ENCODE measurements at regions of chr5 and their contacts with region 1.

Region 1: DNA sequence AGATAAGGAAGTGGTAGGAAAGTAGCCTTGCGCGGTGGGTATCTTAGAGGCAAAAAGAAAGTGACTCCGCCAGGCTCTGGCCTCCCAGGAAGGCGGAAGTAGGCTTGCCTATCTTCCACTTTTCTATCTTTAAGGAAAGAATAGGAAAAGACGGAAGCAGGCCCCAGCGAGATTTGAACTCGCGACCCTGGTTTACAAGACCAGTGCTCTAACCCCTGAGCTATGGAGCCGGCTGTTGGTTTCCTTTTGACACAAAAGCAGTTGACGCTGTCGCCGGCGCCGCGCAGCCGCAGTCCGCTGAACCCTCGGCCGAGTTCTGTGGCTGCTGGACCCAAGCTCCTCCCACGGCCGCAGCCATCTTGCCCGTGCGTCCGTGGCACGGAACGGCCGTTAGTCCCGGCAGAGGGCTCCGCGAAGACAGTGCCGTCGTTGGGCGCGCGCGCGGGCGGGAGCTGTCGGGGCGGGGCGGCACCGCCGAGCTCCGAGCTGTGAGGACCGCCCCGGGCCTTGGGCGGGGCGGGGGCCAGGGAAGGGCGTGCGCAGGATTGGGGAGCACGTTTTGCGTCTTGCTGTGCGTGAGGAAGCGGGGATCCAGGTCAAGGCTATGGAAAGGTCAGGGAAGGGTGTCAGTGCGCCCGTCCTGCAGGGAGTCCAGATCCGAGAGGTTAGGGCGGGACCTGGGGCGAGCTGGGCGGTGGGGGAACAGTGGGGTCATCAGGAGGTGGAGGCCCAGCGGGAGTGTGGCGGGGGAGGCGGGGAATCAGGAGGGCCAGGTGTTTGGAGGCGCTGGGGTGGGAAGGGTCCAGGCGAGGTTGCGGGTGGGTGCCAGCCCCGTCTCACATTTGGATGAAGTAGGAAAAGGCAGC is 13.2 kb downstream of the TRIM7 start:
- DNase-seq: peak; percentile 97

Region 2: GRCh38 chr5:180950291-180950949 is 241.3 kb before region 1 on chr5:
- intact Hi-C with region 1: no loop called
- DNase-seq: no peak

Region 3: GRCh38 chr5:181207214-181208107 is 15.7 kb after region 1 on chr5:
- intact Hi-C with region 1: loop called (anchors 1 kb)
- DNase-seq: no peak

Region 4: DNA sequence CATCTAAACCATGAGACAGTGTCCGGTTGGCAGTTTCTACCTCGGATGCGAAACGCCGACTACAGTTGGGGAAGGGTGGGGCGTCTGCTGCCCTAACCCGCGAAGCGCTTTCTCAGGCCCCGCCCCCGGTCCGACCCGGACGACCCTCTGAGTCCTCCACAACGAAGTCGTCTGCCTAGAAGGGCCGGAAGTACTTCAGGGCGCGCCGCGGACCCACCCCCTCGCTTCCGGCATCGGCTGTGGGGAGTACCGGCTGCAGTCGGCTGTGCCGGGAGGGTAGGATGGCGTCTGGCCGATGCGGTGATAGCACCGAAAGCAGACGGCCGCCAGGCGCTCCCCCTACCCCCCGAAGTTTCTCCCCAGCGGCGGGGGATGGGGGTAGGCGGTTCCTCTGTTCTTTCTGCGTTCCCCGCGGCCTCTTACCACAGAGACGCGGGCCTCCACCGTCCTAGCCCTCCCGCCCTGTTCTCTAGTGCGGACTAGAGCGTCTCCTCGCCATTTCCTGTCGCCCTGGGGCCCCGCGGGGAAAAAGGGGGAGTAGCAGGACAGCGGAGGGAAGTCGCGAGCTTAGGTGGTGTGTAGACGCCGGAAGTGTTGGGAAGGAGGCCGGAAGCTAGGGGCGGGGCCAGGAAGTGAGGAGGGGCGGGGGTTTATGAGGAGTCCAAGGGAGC is 31.4 kb after region 1 on chr5 and contains the start of gene TRIM41:
- intact Hi-C with region 1: loop called (anchors 1 kb)
- DNase-seq: peak; percentile 99
- total RNA-seq, gene TRIM41: 33.0 TPM

Region 5: GRCh38 chr5:181243512-181244343 is 52.0 kb after region 1 on chr5 and contains the start of gene RACK1:
- intact Hi-C with region 1: loop called (anchors 1 kb)
- DNase-seq: peak; percentile 92
- total RNA-seq, gene RACK1: 557 TPM

Region 6: DNA sequence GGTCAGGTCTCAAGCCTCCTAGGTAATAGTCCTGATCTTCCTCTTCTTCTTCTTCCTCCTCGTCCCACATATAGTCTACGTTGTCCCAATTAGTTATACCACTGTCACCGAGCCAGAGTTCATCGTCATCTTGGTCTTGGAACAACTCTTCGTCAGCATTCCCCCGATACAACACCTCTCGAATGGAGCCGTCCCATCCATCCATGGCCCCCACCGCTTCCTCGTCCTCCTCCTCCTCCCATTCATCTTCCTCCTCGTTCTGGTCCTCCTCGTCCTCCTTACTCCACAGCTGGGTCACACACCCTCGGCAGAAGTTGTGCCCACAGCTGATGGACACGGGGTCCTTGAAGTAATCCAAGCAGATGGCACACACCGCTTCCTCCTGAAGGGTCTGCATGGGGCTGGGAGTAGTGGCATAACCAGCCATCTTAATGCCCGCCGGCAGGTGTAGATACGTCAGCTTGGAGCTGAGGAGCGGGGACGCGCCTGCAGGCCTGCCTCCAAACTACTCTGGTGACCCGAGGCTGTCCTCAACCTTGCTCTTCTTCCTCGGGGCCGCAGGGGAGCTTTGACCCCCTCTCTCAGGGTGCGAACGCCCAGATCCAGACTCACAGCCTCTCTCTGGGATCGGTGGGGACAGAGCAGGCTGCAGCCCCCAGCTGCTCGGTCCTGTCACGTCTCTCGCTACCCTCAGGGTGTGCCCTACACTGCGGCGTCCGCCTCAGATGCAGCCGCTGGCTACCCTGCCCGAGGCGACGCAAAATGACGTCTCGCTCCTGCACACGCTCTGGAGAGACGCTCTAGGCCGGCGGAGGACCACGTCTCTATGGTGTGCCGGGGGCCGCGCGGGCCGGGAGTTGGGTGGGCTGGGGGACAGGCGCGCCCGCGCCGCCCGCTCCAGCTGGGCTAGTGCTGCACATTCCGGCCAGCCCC is 68.9 kb after region 1 on chr5 and contains the start of gene TRIM52:
- intact Hi-C with region 1: loop called (anchors 2 kb)
- DNase-seq: peak; percentile 97
- total RNA-seq, gene TRIM52: 9.1 TPM